Dorsolateral prefrontal cortex (tissue), 120 donors: ENCODE measurements at regions of chr16 and their contacts with region 1.

Region 1: GRCh38 chr16:65117811-65118448 is 3.9 kb downstream of the CDH11 start:
- DNase-seq: peak; percentile 58 to 90 (median 84)
- H3K4me3 ChIP-seq: peak overlapping the region in 58 of 59 donors; percentile 3 to 83 (median 42)
- H3K27ac ChIP-seq: peak overlapping the region in 57 of 59 donors; percentile 6 to 93 (median 83)
- H3K27me3 ChIP-seq: no peaks in the 10 kb centered on the region
- CTCF ChIP-seq: peak; percentile 78 to 99 (median 92)

Region 2: DNA sequence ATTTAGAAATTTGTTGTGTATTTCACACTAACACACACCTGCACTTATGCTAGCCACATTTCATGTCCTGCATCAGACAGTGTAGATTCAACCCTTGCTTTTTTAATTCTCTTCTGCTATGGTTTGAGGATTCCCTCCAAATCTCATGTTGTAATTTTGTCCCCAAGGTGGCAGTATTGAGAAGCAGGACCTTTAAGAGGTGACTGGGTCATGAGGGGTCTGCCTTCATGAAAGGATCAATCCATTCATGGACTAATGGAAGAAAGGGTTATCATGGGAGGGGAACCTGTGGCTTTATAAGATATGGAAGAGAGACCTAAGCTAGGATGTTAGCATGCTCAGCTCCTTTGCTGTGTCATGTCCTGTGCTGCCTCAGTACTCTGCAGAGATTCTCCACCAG is 1028.2 kb before region 1 on chr16:
- intact Hi-C with region 1: loop called in 1 of 2 experiments (anchors 10 kb)
- DNase-seq: no peak
- H3K4me3 ChIP-seq: no peak overlapping the region
- H3K27ac ChIP-seq: no peak overlapping the region
- H3K27me3 ChIP-seq: no peaks in the 10 kb centered on the region
- CTCF ChIP-seq: peak; percentile 15 to 70 (median 50)

Region 3: DNA sequence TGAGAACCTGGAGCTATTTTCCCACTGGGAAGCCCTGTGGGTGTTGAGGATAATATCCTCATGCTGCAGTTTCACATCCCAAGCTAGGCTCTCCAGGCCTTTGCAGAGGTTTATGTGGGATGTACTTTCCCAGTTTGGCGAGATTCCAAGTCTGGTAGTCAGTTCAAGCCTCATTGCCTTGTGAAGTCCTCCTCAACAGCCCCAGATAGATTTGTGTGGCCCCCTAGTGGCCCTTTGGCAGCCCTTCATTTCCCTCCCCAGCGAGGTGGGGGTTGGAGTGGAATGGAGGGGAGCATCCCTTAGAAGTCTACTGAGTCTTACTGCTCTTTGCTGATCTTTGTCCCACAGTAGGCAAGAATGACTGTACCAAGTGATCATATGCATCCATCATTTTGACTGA is 134.0 kb before region 1 on chr16:
- intact Hi-C with region 1: loop called in 1 of 2 experiments (anchors 5 kb)
- DNase-seq: peak in 7 of 10 donors; percentile 5 to 74 (median 48)
- H3K4me3 ChIP-seq: no peak overlapping the region
- H3K27ac ChIP-seq: peak overlapping the region in 18 of 59 donors; percentile 3 to 49 (median 29)
- H3K27me3 ChIP-seq: no peaks in the 10 kb centered on the region
- CTCF ChIP-seq: peak; percentile 44 to 76 (median 66)

Region 4: GRCh38 chr16:65070831-65071432 is 47.0 kb before region 1 on chr16:
- intact Hi-C with region 1: loop called (anchors 1 kb)
- DNase-seq: peak; percentile 49 to 94 (median 88)
- H3K4me3 ChIP-seq: peak overlapping the region; percentile 22 to 74 (median 57)
- H3K27ac ChIP-seq: peak overlapping the region; percentile 81 to 98 (median 95)
- H3K27me3 ChIP-seq: no peaks in the 10 kb centered on the region
- CTCF ChIP-seq: peak in 3 of 56 donors; percentile 7 to 37 (median 12)

Region 5: GRCh38 chr16:66315210-66315825 is 1197.4 kb after region 1 on chr16:
- intact Hi-C with region 1: loop called in 1 of 2 experiments (anchors 10 kb)
- DNase-seq: peak in 8 of 10 donors; percentile 32 to 76 (median 60)
- H3K4me3 ChIP-seq: no peak overlapping the region
- H3K27ac ChIP-seq: no peak overlapping the region
- H3K27me3 ChIP-seq: no peaks in the 10 kb centered on the region
- CTCF ChIP-seq: peak; percentile 79 to 98 (median 96)